Calu3 (cell line): ENCODE measurements at regions of chr11 and their contacts with region 1.

Region 1: GRCh38 chr11:35617687-35618496 is at the start of gene FJX1:
- DNase-seq: peak; percentile 66
- H3K4me3 Mint-ChIP-seq: peak within 1 kb of the TSS; percentile 87
- H3K27ac Mint-ChIP-seq: peak within 1 kb of the TSS; percentile 88
- H3K4me1 Mint-ChIP-seq: peaks cover 48% of the 10 kb centered on the region
- H3K27me3 Mint-ChIP-seq: peaks cover 17% of the 10 kb centered on the region
- CTCF ChIP-seq: no peak
- total RNA-seq, gene FJX1: 19.1 and 19.8 TPM in 2 replicates

Region 2: GRCh38 chr11:35571696-35572095 is 46.2 kb before region 1 on chr11:
- CTCF ChIA-PET with region 1: no interaction called
- intact Hi-C with region 1: no loop called
- DNase-seq: no peak
- H3K4me3 Mint-ChIP-seq: no peak overlapping the region
- H3K27ac Mint-ChIP-seq: no peak overlapping the region
- H3K4me1 Mint-ChIP-seq: no peaks in the 10 kb centered on the region
- H3K27me3 Mint-ChIP-seq: peaks cover 85% of the 10 kb centered on the region
- CTCF ChIP-seq: no peak

Region 3: DNA sequence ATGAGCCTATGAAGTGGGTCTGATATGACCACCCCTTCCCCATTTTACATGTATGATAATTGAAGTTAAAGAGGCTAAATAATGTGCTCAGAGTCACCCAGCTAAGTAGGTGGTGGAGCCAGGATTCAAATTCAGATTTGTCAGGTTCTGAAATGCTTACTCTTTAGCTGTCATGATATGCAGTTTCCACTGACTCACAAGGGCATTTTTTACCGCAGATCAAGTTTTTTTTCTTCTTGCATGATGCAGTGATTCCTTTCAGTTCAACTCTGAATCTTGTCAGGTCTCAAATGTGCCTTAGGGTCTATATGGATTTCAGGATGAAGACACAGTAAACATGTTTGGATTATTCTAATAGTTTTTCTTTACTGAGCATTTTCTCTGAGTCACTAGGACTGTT is 32.1 kb after region 1 on chr11:
- CTCF ChIA-PET with region 1: no interaction called
- intact Hi-C with region 1: no loop called
- DNase-seq: no peak
- H3K4me3 Mint-ChIP-seq: no peak overlapping the region
- H3K27ac Mint-ChIP-seq: no peak overlapping the region
- H3K4me1 Mint-ChIP-seq: no peaks in the 10 kb centered on the region
- H3K27me3 Mint-ChIP-seq: peaks cover 23% of the 10 kb centered on the region
- CTCF ChIP-seq: no peak

Region 4: DNA sequence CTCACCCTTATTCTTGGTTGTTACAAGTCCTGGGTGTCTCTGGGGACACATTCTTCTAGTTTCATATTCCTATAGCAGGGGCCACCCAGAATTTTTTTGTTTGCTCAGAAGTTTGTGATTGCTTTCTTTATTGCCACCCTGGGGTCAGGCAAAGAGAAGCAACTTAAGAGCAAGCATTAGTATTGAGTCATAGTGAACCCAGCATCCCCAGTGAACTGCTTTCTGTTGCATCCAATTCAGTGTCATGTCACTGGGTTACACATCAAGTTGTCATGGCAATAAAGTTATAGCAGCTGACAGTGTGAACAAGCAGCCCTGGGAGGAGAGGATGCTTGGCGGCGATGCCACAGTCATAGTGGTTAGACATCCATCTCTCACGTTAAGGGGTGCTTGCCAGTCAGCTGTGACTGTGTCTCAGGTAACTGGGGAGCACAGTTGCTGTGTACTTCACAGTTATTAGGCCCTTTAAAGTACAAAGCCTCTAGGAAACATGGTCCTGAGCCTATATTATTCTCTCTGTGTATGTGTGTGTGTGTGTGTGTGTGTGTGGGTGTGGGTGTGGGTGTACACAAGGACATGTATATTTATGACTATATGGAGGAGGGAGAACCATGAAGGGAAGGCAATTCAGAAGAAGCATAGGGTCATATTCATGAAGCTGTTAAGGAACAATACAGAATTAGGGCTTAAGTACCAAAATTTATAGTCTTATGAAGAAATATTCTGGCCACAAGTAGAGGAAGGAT is 97.2 kb after region 1 on chr11:
- CTCF ChIA-PET with region 1: no interaction called
- intact Hi-C with region 1: no loop called
- DNase-seq: no peak
- H3K4me3 Mint-ChIP-seq: no peak overlapping the region
- H3K27ac Mint-ChIP-seq: no peak overlapping the region
- H3K4me1 Mint-ChIP-seq: peaks cover 18% of the 10 kb centered on the region
- H3K27me3 Mint-ChIP-seq: no peaks in the 10 kb centered on the region
- CTCF ChIP-seq: no peak

Region 5: GRCh38 chr11:35735903-35736302 is 118.0 kb after region 1 on chr11:
- CTCF ChIA-PET with region 1: no interaction called
- intact Hi-C with region 1: loop called (anchors 10 kb)
- DNase-seq: no peak
- H3K4me3 Mint-ChIP-seq: no peak overlapping the region
- H3K27ac Mint-ChIP-seq: peak overlapping the region; percentile 83
- H3K4me1 Mint-ChIP-seq: peaks cover 38% of the 10 kb centered on the region
- H3K27me3 Mint-ChIP-seq: no peaks in the 10 kb centered on the region
- CTCF ChIP-seq: no peak

Region 6: DNA sequence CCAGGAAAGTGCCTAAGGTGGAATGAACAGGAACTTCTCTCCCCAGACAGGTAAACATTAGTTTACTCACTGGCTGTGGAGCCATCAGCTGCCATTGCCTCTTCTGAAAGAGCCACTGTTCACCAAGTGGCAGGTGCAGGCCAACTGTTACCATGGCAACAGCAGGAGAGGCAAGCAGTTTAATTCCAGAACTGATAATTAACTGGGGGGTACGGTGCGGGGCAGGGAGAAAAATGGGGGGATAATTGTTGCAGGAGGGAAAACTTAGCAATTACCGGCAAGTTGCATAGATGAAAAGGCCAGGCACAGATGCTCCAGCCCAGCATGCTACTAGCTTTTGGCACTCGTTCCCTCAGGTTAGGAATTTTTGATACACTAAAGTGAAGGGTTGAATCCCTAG is 129.8 kb after region 1 on chr11:
- CTCF ChIA-PET with region 1: no interaction called
- intact Hi-C with region 1: no loop called
- DNase-seq: peak; percentile 66
- H3K4me3 Mint-ChIP-seq: peak overlapping the region; percentile 36
- H3K27ac Mint-ChIP-seq: peak overlapping the region; percentile 90
- H3K4me1 Mint-ChIP-seq: peaks cover 80% of the 10 kb centered on the region
- H3K27me3 Mint-ChIP-seq: no peaks in the 10 kb centered on the region
- CTCF ChIP-seq: no peak

Region 7: DNA sequence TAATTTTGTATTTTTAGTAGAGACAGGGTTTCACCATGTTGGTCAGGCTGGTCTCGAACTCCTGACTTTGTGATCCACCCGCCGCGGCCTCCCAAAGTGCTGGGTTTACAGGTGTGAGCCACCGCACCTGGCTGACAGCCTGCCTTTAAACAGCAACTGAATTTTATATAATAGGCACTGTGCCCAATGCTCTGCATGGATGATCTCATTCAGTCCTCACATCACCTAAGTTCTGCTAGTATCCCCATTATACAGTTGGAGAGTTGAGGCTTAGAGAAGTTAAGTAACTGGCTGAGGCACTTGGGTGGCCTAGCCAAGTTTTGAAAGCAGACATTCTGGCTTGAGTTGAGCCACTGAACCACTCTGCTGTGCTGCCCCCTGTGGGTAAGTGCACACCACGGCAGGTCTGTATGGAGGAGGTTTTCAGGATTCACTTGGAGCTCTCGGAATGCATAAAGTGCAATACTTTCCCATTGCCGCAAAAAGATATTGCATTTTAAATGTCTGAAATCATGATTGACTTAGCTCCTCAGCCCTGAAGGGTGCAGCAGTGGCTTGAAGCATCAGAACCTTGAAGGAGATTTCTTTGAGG is 438.4 kb after region 1 on chr11:
- CTCF ChIA-PET with region 1: no interaction called
- intact Hi-C with region 1: loop called (anchors 1 kb)
- DNase-seq: peak; percentile 45
- H3K4me3 Mint-ChIP-seq: no peak overlapping the region
- H3K27ac Mint-ChIP-seq: no peak overlapping the region
- H3K4me1 Mint-ChIP-seq: no peaks in the 10 kb centered on the region
- H3K27me3 Mint-ChIP-seq: no peaks in the 10 kb centered on the region
- CTCF ChIP-seq: peak; percentile 46

Region 8: GRCh38 chr11:36149538-36150242 is 531.8 kb after region 1 on chr11:
- CTCF ChIA-PET with region 1: no interaction called
- intact Hi-C with region 1: loop called (anchors 1 kb)
- DNase-seq: peak; percentile 89
- H3K4me3 Mint-ChIP-seq: peak overlapping the region; percentile 35
- H3K27ac Mint-ChIP-seq: peak overlapping the region; percentile 88
- H3K4me1 Mint-ChIP-seq: peaks cover 46% of the 10 kb centered on the region
- H3K27me3 Mint-ChIP-seq: no peaks in the 10 kb centered on the region
- CTCF ChIP-seq: peak; percentile 61